MCF 10A (cell line): ENCODE measurements at regions of chr5 and their contacts with region 1.

Region 1: GRCh38 chr5:171913987-171914273 is 92.5 kb downstream of the FBXW11 start:
- DNase-seq: no peak
- H3K4me3 Mint-ChIP-seq: no peak overlapping the region
- H3K27ac Mint-ChIP-seq: no peak overlapping the region
- H3K4me1 Mint-ChIP-seq: peaks cover 27% of the 10 kb centered on the region
- H3K27me3 Mint-ChIP-seq: no peaks in the 10 kb centered on the region
- CTCF ChIP-seq: no peak

Region 2: DNA sequence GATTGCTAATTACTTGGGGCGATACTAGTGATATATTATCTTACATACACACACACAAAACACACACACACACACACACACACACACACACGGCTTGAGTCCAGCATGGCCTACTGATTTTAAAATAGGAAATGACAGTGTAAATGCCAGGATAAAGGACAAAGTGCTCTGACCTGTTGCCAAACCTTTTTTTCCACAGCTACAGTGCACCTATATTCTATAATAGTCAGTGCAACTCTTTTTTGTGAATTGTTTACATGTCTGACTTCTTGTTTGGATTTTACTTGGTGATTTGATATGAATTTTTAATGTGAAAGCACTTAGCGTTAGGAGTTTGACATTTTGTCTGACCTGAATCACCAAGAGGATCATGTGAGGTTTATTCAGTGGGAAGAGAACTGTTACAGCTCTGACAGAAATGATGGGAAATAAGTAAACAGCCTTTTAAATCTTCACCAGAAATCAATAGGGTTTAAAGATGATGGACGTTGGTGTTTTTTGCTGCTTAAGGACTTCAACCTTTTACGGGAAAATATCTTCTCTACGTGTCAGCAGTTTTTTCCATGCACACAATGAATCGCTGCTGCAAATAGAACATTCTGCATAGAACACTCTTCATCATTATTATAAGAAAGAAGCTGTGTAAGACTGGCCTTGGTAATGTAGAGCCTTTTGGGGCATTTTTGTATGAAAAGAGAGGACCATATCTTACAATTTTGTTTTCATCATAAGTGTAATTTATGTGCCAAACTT is 833.6 kb before region 1 on chr5:
- CTCF ChIA-PET with region 1: no interaction called
- POLR2A ChIA-PET with region 1: no interaction called
- intact Hi-C with region 1: no loop called
- DNase-seq: no peak
- H3K4me3 Mint-ChIP-seq: no peak overlapping the region
- H3K27ac Mint-ChIP-seq: no peak overlapping the region
- H3K4me1 Mint-ChIP-seq: no peaks in the 10 kb centered on the region
- H3K27me3 Mint-ChIP-seq: no peaks in the 10 kb centered on the region
- CTCF ChIP-seq: no peak

Region 3: GRCh38 chr5:171418316-171418981 is 495.5 kb before region 1 on chr5:
- CTCF ChIA-PET with region 1: interaction called, 191 read pairs
- POLR2A ChIA-PET with region 1: interaction called, 16 read pairs
- intact Hi-C with region 1: no loop called
- DNase-seq: peak; percentile 87
- H3K4me3 Mint-ChIP-seq: peak overlapping the region; percentile 68
- H3K27ac Mint-ChIP-seq: no peak overlapping the region
- H3K4me1 Mint-ChIP-seq: peaks cover 34% of the 10 kb centered on the region
- H3K27me3 Mint-ChIP-seq: no peaks in the 10 kb centered on the region
- CTCF ChIP-seq: peak; percentile 99

Region 4: DNA sequence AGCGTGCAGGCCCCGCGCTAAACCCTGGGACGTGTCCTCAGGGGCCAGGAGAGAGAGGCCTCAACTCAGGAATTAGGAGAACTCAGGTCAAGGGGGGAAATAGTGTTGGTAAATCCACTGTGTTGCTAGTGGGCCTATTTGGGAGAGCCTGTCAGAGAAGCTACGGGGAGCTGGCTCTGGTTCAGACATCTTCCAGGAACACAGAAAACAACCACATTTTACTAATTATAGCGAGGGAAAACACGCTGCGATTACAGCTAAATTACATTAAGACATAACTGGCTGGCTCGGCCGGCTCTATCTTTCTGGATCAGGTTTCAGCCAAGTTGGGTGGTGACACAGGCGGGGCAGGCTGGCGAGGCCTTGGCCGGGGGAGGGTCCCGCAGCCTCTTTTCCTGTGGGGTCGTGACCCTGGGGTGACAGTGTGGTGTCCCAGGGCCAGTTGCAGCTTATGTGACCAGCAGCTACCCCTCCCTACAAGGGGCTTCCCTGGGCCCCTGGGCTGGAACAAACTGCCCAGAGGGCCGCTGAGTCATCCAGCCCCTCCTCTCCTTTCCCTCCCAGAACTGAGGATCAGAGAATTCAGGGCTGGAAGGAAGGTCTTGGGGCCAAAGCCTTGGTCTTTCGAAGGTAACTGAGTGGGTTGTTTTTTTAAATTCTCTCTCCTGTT is 419.3 kb before region 1 on chr5:
- CTCF ChIA-PET with region 1: no interaction called
- POLR2A ChIA-PET with region 1: no interaction called
- intact Hi-C with region 1: no loop called
- DNase-seq: peak; percentile 91
- H3K4me3 Mint-ChIP-seq: peak overlapping the region; percentile 67
- H3K27ac Mint-ChIP-seq: peak overlapping the region; percentile 57
- H3K4me1 Mint-ChIP-seq: peaks cover 26% of the 10 kb centered on the region
- H3K27me3 Mint-ChIP-seq: peaks cover 17% of the 10 kb centered on the region
- CTCF ChIP-seq: no peak

Region 5: DNA sequence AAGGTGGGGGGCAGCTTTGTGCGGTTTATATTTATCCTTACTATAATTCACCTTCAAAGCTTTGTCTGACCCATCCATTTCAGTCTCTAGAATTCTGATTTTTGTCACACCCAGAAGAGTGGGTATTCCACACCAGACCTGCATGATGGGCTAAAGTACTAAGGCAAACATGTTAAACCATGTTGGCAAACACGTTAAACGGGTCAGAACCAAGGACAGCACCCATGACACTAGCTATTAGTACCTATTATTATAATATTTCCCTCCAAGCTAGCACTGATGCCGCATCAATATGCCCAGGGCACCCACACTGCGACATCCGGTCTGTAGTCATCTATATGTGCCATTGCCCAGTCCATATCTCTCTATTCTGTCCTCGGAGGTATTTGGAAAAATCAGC is 12.2 kb before region 1 on chr5:
- CTCF ChIA-PET with region 1: interaction called, 19 read pairs
- POLR2A ChIA-PET with region 1: no interaction called
- intact Hi-C with region 1: no loop called
- DNase-seq: no peak
- H3K4me3 Mint-ChIP-seq: no peak overlapping the region
- H3K27ac Mint-ChIP-seq: no peak overlapping the region
- H3K4me1 Mint-ChIP-seq: no peaks in the 10 kb centered on the region
- H3K27me3 Mint-ChIP-seq: no peaks in the 10 kb centered on the region
- CTCF ChIP-seq: no peak

Region 6: DNA sequence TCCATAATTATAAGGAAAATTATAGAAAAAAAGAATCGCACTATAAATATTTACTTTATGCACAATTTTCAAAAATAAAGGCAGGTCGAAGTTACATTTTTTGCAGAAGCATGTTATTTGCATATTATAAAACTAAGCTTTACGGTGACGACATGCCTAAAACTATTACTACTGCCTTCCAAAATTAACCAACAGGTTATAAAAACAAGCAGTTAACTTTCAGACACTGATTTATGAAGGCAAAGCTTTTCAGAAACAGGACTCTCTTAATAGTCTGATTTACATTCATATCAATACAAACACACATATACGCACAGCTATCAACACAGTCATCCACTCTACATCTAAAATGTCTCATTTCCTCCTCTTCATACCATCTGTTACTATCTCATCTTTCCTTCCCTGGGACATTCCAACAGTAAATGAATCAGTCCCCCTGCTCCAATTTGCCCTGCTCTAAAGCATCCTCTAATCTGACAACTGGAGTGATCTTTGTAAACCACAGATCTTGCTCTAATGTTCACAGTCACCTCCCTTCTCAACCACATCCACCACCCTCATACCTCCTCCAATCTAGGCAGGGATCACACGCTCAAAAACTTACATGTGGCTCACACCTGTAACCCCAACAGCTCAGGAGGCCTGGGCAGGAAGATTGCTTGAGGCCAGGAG is 71.0 kb after region 1 on chr5:
- CTCF ChIA-PET with region 1: interaction called, 11 read pairs
- POLR2A ChIA-PET with region 1: no interaction called
- intact Hi-C with region 1: no loop called
- DNase-seq: no peak
- H3K4me3 Mint-ChIP-seq: no peak overlapping the region
- H3K27ac Mint-ChIP-seq: no peak overlapping the region
- H3K4me1 Mint-ChIP-seq: peaks cover 14% of the 10 kb centered on the region
- H3K27me3 Mint-ChIP-seq: no peaks in the 10 kb centered on the region
- CTCF ChIP-seq: no peak

Region 7: GRCh38 chr5:172035039-172035438 is 121.1 kb after region 1 on chr5:
- CTCF ChIA-PET with region 1: interaction called, 124 read pairs
- POLR2A ChIA-PET with region 1: no interaction called
- intact Hi-C with region 1: loop called (anchors 1 kb)
- DNase-seq: no peak
- H3K4me3 Mint-ChIP-seq: no peak overlapping the region
- H3K27ac Mint-ChIP-seq: no peak overlapping the region
- H3K4me1 Mint-ChIP-seq: peaks cover 2% of the 10 kb centered on the region
- H3K27me3 Mint-ChIP-seq: no peaks in the 10 kb centered on the region
- CTCF ChIP-seq: no peak

Region 8: GRCh38 chr5:172059661-172060100 is 145.8 kb after region 1 on chr5:
- CTCF ChIA-PET with region 1: interaction called, 118 read pairs
- POLR2A ChIA-PET with region 1: interaction called, 9 read pairs
- intact Hi-C with region 1: loop called (anchors 1 kb)
- DNase-seq: peak; percentile 30
- H3K4me3 Mint-ChIP-seq: no peak overlapping the region
- H3K27ac Mint-ChIP-seq: no peak overlapping the region
- H3K4me1 Mint-ChIP-seq: no peaks in the 10 kb centered on the region
- H3K27me3 Mint-ChIP-seq: no peaks in the 10 kb centered on the region
- CTCF ChIP-seq: peak; percentile 64

Region 9: DNA sequence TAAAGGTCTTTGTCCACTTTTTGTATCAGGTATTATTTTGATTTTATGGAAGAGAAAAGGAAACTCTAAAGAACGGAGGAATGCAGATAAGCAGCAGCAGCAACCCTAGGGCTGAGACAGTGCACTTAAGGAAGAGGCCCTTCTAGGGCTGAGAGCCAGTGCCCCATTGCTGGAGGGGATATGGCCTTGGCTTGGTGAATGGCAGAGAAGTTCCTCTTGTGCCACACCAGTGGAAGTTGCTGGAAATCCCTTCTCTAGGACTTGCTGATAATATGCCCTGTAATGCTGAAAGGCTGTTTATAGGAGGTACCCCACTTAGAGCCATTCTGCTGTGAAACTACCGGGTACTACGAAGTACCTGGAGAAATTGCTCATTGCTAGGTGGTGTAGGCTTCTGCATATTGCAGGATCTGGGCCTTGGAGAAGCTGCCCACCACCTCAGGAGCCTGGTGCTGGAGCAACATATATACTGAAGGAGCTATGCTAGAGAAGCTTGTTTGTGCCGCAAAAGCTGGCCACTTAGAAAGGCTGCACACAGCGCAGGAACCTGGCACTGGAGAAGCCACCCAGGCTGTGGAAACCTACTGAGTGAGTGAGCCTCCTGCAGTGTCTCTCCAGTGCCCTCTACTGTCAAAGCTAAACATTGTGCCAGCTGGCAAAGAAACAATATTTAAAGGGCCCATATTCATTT is 379.3 kb after region 1 on chr5:
- CTCF ChIA-PET with region 1: interaction called, 21 read pairs
- POLR2A ChIA-PET with region 1: no interaction called
- intact Hi-C with region 1: loop called (anchors 1 kb)
- DNase-seq: peak; percentile 87
- H3K4me3 Mint-ChIP-seq: no peak overlapping the region
- H3K27ac Mint-ChIP-seq: no peak overlapping the region
- H3K4me1 Mint-ChIP-seq: peaks cover 9% of the 10 kb centered on the region
- H3K27me3 Mint-ChIP-seq: peaks cover 12% of the 10 kb centered on the region
- CTCF ChIP-seq: peak; percentile 97